AG04449 (cell line): ENCODE measurements at regions of chr10 and their contacts with region 1.

Region 1: DNA sequence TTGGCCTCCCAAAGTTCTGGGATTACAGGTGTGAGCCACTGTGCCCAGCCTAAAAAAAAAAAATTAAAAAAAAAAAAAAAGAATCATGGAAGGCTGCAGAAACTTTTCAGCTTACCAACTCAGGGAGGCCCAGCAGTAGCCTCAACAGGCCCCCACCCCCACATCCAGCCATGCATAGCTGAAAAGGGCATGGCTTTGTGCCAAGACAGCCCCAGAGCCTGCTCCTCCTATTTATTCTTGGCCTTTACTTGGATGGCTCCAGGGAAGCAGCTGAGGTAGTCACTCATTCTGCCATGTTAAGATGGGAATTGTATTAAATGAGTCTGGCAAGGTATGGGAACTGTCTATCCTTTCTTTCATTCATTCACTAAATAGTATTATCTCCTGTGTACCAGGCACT is 13.7 kb upstream of the CNNM2 start:
- DNase-seq: no peak
- H3K4me3 ChIP-seq: no peak overlapping the region
- CTCF ChIP-seq: no peak

Region 2: DNA sequence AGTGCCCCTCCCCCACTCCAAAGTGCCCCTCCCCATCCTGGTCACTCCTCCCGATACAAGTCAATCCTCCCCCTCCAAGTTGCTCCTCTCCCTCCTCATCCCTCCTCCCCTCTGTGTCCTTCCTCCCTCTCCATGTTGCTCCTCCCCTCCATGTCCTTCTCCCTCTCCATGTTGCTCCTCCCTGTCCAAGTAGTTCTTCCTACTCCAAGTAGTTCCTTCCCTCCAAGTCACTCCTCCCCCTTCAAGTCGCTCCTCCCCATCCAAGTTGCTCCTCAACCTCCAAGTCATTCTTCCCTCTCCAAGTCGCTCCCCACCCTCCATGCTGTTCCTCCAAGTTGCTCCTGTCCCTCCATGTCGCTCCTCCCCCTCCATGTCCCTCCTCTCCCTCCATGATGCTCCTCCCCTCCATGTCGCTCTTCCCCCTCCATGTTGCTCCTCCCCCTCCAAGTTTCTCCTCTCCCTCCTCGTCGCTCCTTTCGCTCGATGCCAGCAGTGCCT is 169.2 kb before region 1 on chr10:
- CTCF ChIA-PET with region 1: interaction called, 30 read pairs
- POLR2A ChIA-PET with region 1: no interaction called
- DNase-seq: no peak
- H3K4me3 ChIP-seq: no peak overlapping the region
- CTCF ChIP-seq: no peak

Region 3: DNA sequence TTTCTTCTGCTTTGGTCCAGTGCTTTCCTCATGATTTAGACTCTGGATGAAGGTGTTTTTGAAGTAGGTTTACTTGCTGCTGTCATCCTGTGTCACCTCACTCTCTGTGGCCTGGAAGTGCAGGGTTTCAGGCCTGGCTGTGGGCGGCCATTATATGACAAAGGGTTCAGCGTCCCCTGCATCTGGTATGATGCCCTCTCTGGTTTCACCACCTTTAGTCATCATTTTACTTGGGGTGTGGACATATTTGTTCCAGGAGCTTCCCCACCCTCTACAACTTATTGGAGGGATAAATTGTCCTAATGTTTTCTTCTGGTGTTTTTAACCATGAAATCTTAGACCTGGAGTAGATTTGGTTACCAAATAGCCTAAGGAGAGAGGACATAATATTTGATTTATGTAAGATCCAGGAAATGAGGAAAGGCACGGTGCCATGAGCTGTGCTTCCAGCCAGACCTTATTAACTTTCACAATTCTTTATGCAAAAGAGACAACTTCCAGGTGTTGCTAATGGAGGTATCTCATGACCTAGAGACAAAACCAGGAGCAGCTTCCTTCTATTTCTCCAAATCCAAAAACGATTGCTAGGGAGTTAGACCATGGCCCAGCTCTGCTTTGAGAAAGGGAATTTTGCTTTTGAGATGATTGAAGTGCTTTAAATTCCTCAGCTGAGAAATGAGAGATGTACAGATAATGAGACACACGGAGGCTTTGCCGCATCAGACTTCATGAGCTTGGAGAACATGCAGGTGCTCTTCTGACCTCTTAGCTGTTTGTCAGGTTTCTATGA is 139.8 kb before region 1 on chr10:
- CTCF ChIA-PET with region 1: interaction called, 12 read pairs
- POLR2A ChIA-PET with region 1: no interaction called
- DNase-seq: no peak
- H3K4me3 ChIP-seq: no peak overlapping the region
- CTCF ChIP-seq: no peak

Region 4: GRCh38 chr10:102845352-102845902 is 58.9 kb before region 1 on chr10:
- CTCF ChIA-PET with region 1: interaction called, 355 read pairs
- POLR2A ChIA-PET with region 1: no interaction called
- DNase-seq: no peak
- H3K4me3 ChIP-seq: no peak overlapping the region
- CTCF ChIP-seq: no peak

Region 5: DNA sequence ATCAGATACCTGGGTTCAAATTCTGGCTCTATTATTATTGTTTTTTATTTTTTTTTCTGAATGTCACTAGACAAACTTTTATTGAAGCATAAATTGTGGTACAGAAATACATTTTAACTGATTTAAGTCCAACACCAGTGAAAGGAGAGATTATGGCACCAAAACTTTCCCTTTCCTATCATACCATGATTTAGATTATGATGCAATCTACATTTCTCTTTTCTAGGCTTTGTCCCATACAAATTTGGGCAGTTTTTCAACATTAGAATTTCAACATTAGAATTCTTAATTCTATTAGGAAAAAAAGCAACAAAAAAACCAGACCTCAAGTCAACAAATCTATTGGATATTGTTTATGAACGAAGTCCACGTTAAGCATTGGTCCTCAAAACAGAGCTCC is 24.1 kb before region 1 on chr10:
- CTCF ChIA-PET with region 1: interaction called, 18 read pairs
- POLR2A ChIA-PET with region 1: no interaction called
- DNase-seq: no peak
- H3K4me3 ChIP-seq: no peak overlapping the region
- CTCF ChIP-seq: no peak

Region 6: GRCh38 chr10:103069453-103070331 is 165.3 kb after region 1 on chr10:
- CTCF ChIA-PET with region 1: interaction called, 11 read pairs
- POLR2A ChIA-PET with region 1: no interaction called
- DNase-seq: no peak
- H3K4me3 ChIP-seq: no peak overlapping the region
- CTCF ChIP-seq: peak; percentile 54